IMR-90 (cell line): ENCODE measurements at regions of chr3 and their contacts with region 1.

Region 1: GRCh38 chr3:194682694-194683310 is 2.9 kb upstream of the FAM43A start:
- DNase-seq: peak; percentile 86
- ATAC-seq: peak; percentile 55
- H3K4me3 ChIP-seq: no peak overlapping the region
- H3K27ac ChIP-seq: no peak overlapping the region
- H3K4me1 ChIP-seq: peaks cover 7% of the 10 kb centered on the region
- H3K27me3 ChIP-seq: no peaks in the 10 kb centered on the region; the same call in 1 of the 2 replicates
- CTCF ChIP-seq: peak; percentile 94
- POLR2A ChIP-seq: 0 out of 2 replicates have a peak, but pooled peaks have one; percentile 27
- RAD21 ChIP-seq: peak; percentile 93

Region 2: GRCh38 chr3:194671900-194672808 is 10.6 kb before region 1 on chr3 and contains the start of gene LSG1:
- CTCF ChIA-PET with region 1: interaction called, 27 read pairs
- POLR2A ChIA-PET with region 1: interaction called, 4 read pairs
- dilution Hi-C with region 1: no loop called
- in situ Hi-C with region 1: no loop called
- intact Hi-C with region 1: no loop called
- DNase-seq: peak; percentile 97
- ATAC-seq: peak; percentile 97
- H3K4me3 ChIP-seq: peak within 1 kb of the TSS; percentile 87
- H3K27ac ChIP-seq: peak within 1 kb of the TSS; percentile 86
- H3K4me1 ChIP-seq: peaks cover 1% of the 10 kb centered on the region; the same call in 1 of the 2 replicates
- H3K27me3 ChIP-seq: peaks cover 2% of the 10 kb centered on the region; the same call in 1 of the 2 replicates
- CTCF ChIP-seq: no peak
- POLR2A ChIP-seq: peak; percentile 67; the same call in 1 of the 2 replicates
- RAD21 ChIP-seq: no peak
- total RNA-seq, gene LSG1: 45.2 and 46.7 TPM in 2 replicates

Region 3: GRCh38 chr3:194871143-194871863 is 188.5 kb after region 1 on chr3:
- CTCF ChIA-PET with region 1: interaction called, 4 read pairs
- POLR2A ChIA-PET with region 1: no interaction called
- dilution Hi-C with region 1: no loop called
- in situ Hi-C with region 1: no loop called
- intact Hi-C with region 1: loop called (anchors 2 kb)
- DNase-seq: peak; percentile 91
- ATAC-seq: peak; percentile 83
- H3K4me3 ChIP-seq: no peak overlapping the region
- H3K27ac ChIP-seq: peak overlapping the region; percentile 86
- H3K4me1 ChIP-seq: peaks cover 17% of the 10 kb centered on the region
- H3K27me3 ChIP-seq: 0 out of 2 replicates have a peak, but pooled peaks cover 3% of the 10 kb centered on the region
- CTCF ChIP-seq: 0 out of 2 replicates have a peak, but pooled peaks have one; percentile 8
- POLR2A ChIP-seq: peak; percentile 48; the same call in 1 of the 2 replicates
- RAD21 ChIP-seq: peak; percentile 36

Region 4: GRCh38 chr3:195106418-195106906 is 423.7 kb after region 1 on chr3:
- CTCF ChIA-PET with region 1: interaction called, 7 read pairs
- POLR2A ChIA-PET with region 1: no interaction called
- dilution Hi-C with region 1: no loop called
- in situ Hi-C with region 1: loop called (anchors 5 kb)
- intact Hi-C with region 1: loop called (anchors 1 kb)
- DNase-seq: peak; percentile 52
- ATAC-seq: peak; percentile 91
- H3K4me3 ChIP-seq: no peak overlapping the region
- H3K27ac ChIP-seq: peak overlapping the region; percentile 29; the same call in 1 of the 2 replicates
- H3K4me1 ChIP-seq: peaks cover 10% of the 10 kb centered on the region
- H3K27me3 ChIP-seq: no peaks in the 10 kb centered on the region
- CTCF ChIP-seq: peak; percentile 89
- POLR2A ChIP-seq: no peak
- RAD21 ChIP-seq: peak; percentile 87

Region 5: GRCh38 chr3:195259475-195260279 is 576.9 kb after region 1 on chr3:
- CTCF ChIA-PET with region 1: interaction called, 7 read pairs
- POLR2A ChIA-PET with region 1: no interaction called
- dilution Hi-C with region 1: no loop called
- in situ Hi-C with region 1: no loop called
- intact Hi-C with region 1: loop called (anchors 1 kb)
- DNase-seq: peak; percentile 90
- ATAC-seq: peak; percentile 95
- H3K4me3 ChIP-seq: peak overlapping the region; percentile 58
- H3K27ac ChIP-seq: peak overlapping the region; percentile 87
- H3K4me1 ChIP-seq: peaks cover 16% of the 10 kb centered on the region
- H3K27me3 ChIP-seq: no peaks in the 10 kb centered on the region
- CTCF ChIP-seq: peak; percentile 94
- POLR2A ChIP-seq: peak; percentile 80
- RAD21 ChIP-seq: peak; percentile 85

Region 6: DNA sequence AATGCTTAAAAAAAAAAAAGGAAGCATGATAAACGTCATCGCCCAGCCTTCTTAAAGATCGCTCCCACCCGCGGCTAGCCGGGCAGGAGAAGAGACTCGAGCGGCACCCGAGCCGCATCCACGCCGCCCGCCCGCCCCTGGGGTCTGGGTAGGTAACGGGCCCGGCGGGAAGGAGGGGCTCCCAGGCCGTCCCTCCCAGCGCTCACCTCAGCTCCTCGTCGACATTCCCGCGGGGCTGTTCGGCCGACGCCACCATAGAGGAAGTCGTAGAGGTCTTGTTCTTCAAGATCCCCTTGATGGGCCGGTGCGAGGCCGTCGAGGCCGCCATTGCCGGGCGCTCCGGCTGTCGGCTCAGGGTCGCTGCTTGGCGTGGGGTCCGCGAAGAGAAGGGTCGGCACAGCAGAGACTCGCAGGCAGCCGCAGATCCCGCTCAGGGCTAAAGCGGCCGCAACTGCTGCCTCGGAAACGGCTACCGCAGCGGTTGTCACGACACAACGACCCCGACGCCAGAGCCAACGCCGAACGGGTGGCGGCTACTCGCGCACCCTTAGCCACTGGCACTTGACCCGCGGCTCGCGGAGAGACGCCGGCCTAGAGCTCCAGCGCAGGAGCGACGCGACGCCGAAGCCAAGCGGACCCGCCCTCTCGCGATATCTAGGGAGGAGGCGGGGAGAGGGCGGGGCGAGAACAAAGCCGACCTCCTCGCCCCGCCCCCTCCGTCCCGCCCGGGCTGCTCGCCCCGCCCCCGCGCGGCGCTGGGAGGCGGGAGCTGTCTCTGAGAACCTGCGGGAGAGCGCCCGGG is 860.1 kb after region 1 on chr3 and contains the start of gene PPP1R2:
- CTCF ChIA-PET with region 1: no interaction called
- POLR2A ChIA-PET with region 1: interaction called, 19 read pairs
- dilution Hi-C with region 1: no loop called
- in situ Hi-C with region 1: no loop called
- intact Hi-C with region 1: no loop called
- DNase-seq: peak; percentile 86
- ATAC-seq: peak; percentile 96
- H3K4me3 ChIP-seq: peak within 1 kb of the TSS; percentile 83
- H3K27ac ChIP-seq: peak within 1 kb of the TSS; percentile 70
- H3K4me1 ChIP-seq: peaks cover 4% of the 10 kb centered on the region
- H3K27me3 ChIP-seq: peaks cover 4% of the 10 kb centered on the region; the same call in 1 of the 2 replicates
- CTCF ChIP-seq: no peak
- POLR2A ChIP-seq: peak; percentile 96
- RAD21 ChIP-seq: no peak
- total RNA-seq, gene PPP1R2: 36.0 and 55.3 TPM in 2 replicates